ENCODE measurements at regions of chr17 and their contacts with region 1.

Region 1: DNA sequence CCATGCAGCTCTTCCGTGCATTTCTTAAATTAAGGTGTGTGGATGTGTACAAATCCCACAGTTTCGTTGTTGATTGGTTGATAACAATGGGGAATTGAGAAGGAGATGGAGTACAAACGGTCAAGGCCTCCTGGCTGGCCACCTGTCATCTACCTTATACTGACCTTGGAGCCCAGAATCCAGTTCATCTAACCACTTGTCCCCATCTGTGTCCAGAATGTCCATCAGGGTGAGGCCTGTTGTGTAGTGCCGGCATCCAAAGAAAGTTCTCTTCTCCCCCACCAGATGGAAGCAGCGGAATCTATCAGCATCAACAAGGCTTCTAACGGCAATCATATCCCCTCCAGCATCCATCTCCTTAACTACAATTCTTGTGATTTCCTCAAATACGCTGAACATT is 1.5 kb downstream of the GSDMB start:
- DNase-seq: no peak
- ATAC-seq: no peak
- H3K4me3 ChIP-seq: no peak overlapping the region
- H3K4me3 Mint-ChIP-seq: peak overlapping the region in 1 of 10 donors; percentile 21
- H3K27ac ChIP-seq: no peak overlapping the region
- H3K27ac Mint-ChIP-seq: peak overlapping the region in 2 of 9 donors; percentile 56 to 68
- H3K4me1 ChIP-seq: peaks cover 14 to 28% of the 10 kb centered on the region in 2 donors
- H3K4me1 Mint-ChIP-seq: peaks cover 10 to 55% (median 45%) of the 10 kb centered on the region in 7 donors
- H3K27me3 ChIP-seq: no peaks in the 10 kb centered on the region
- H3K27me3 Mint-ChIP-seq: no peaks in the 10 kb centered on the region

Region 2: GRCh38 chr17:38777641-38778250 is 1139.2 kb before region 1 on chr17:
- CTCF ChIA-PET with region 1: no interaction called
- POLR2A ChIA-PET with region 1: no interaction called
- intact Hi-C with region 1: no loop called
- DNase-seq: no peak
- ATAC-seq: no peak
- H3K4me3 ChIP-seq: no peak overlapping the region
- H3K4me3 Mint-ChIP-seq: no peak overlapping the region
- H3K27ac ChIP-seq: no peak overlapping the region
- H3K27ac Mint-ChIP-seq: no peak overlapping the region
- H3K4me1 ChIP-seq: no peaks in the 10 kb centered on the region
- H3K4me1 Mint-ChIP-seq: peaks cover 0 to 3% (median 0%) of the 10 kb centered on the region in 7 donors
- H3K27me3 ChIP-seq: no peaks in the 10 kb centered on the region
- H3K27me3 Mint-ChIP-seq: no peaks in the 10 kb centered on the region

Region 3: GRCh38 chr17:39903158-39903884 is 13.6 kb before region 1 on chr17:
- CTCF ChIA-PET with region 1: no interaction called
- POLR2A ChIA-PET with region 1: interaction called, 3 read pairs
- intact Hi-C with region 1: loop called in 1 of 2 experiments (anchors 1 kb)
- DNase-seq: peak in 1 of 9 donors; percentile 16
- ATAC-seq: peak; percentile 54
- H3K4me3 ChIP-seq: no peak overlapping the region
- H3K4me3 Mint-ChIP-seq: peak overlapping the region in 7 of 10 donors; percentile 8 to 77 (median 47)
- H3K27ac ChIP-seq: no peak overlapping the region
- H3K27ac Mint-ChIP-seq: peak overlapping the region in 5 of 9 donors; percentile 38 to 88 (median 64)
- H3K4me1 ChIP-seq: peaks cover 10% of the 10 kb centered on the region in 2 donors
- H3K4me1 Mint-ChIP-seq: peaks cover 0 to 38% (median 16%) of the 10 kb centered on the region in 7 donors
- H3K27me3 ChIP-seq: no peaks in the 10 kb centered on the region
- H3K27me3 Mint-ChIP-seq: no peaks in the 10 kb centered on the region

Region 4: GRCh38 chr17:40086150-40087044 is 169.5 kb after region 1 on chr17:
- CTCF ChIA-PET with region 1: no interaction called
- POLR2A ChIA-PET with region 1: no interaction called
- intact Hi-C with region 1: no loop called
- DNase-seq: peak in 6 of 9 donors; percentile 56 to 69 (median 61)
- ATAC-seq: peak; percentile 76
- H3K4me3 ChIP-seq: no peak overlapping the region
- H3K4me3 Mint-ChIP-seq: peak overlapping the region in 1 of 10 donors; percentile 38
- H3K27ac ChIP-seq: no peak overlapping the region
- H3K27ac Mint-ChIP-seq: peak overlapping the region in 8 of 9 donors; percentile 9 to 70 (median 47)
- H3K4me1 ChIP-seq: peaks cover 0 to 4% of the 10 kb centered on the region in 2 donors
- H3K4me1 Mint-ChIP-seq: peaks cover 4 to 35% (median 21%) of the 10 kb centered on the region in 7 donors
- H3K27me3 ChIP-seq: no peaks in the 10 kb centered on the region
- H3K27me3 Mint-ChIP-seq: no peaks in the 10 kb centered on the region